CD8-positive, alpha-beta T cell (primary cell): ENCODE measurements at regions of chr5 and their contacts with region 1.

Region 1: GRCh38 chr5:95846554-95847260 is 24.2 kb upstream of the GLRX start:
- DNase-seq: peak; percentile 32 to 82 (median 64)
- ATAC-seq: peak; percentile 88
- H3K4me3 ChIP-seq: no peak overlapping the region
- H3K4me3 Mint-ChIP-seq: no peak overlapping the region
- H3K27ac ChIP-seq: no peak overlapping the region
- H3K27ac Mint-ChIP-seq: no peak overlapping the region
- H3K4me1 ChIP-seq: peaks cover 11% of the 10 kb centered on the region
- H3K4me1 Mint-ChIP-seq: peaks cover 10% of the 10 kb centered on the region
- H3K27me3 ChIP-seq: no peaks in the 10 kb centered on the region
- H3K27me3 Mint-ChIP-seq: no peaks in the 10 kb centered on the region
- CTCF ChIP-seq: peak; percentile 91

Region 2: DNA sequence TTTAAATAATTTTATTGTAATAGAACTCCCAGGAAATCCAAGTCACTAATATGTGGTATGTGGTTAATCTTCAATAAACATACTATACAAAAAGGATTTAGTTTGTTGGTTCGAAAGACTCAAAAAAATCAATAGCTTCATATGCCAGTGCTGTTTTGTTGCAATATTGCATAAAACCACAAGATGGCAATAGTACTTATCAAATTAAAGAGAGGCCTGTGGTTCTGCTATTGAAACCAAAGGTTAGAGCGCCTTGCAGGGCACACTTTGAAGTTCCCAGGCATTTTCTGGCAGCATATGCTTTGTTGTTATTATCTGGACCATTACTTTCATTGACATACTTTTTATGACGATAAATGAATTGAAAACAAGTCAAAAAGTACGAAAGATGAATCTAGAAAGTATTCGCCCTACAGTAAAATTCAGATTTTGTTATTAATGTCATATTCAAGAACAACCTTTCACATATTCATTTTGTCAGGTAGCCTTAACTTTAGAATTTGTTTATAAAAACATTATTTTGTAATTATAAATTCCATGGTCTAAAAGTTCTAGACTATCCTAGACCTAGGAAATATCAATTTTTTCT is 878.1 kb before region 1 on chr5:
- CTCF ChIA-PET with region 1: no interaction called
- POLR2A ChIA-PET with region 1: no interaction called
- intact Hi-C with region 1: loop called (anchors 5 to 10 kb)
- DNase-seq: peak in 2 of 9 experiments; percentile 35 to 54
- ATAC-seq: peak; percentile 40
- H3K4me3 ChIP-seq: no peak overlapping the region
- H3K4me3 Mint-ChIP-seq: no peak overlapping the region
- H3K27ac ChIP-seq: no peak overlapping the region
- H3K27ac Mint-ChIP-seq: no peak overlapping the region
- H3K4me1 ChIP-seq: no peaks in the 10 kb centered on the region
- H3K4me1 Mint-ChIP-seq: no peaks in the 10 kb centered on the region
- H3K27me3 ChIP-seq: no peaks in the 10 kb centered on the region
- H3K27me3 Mint-ChIP-seq: no peaks in the 10 kb centered on the region
- CTCF ChIP-seq: peak; percentile 80

Region 3: DNA sequence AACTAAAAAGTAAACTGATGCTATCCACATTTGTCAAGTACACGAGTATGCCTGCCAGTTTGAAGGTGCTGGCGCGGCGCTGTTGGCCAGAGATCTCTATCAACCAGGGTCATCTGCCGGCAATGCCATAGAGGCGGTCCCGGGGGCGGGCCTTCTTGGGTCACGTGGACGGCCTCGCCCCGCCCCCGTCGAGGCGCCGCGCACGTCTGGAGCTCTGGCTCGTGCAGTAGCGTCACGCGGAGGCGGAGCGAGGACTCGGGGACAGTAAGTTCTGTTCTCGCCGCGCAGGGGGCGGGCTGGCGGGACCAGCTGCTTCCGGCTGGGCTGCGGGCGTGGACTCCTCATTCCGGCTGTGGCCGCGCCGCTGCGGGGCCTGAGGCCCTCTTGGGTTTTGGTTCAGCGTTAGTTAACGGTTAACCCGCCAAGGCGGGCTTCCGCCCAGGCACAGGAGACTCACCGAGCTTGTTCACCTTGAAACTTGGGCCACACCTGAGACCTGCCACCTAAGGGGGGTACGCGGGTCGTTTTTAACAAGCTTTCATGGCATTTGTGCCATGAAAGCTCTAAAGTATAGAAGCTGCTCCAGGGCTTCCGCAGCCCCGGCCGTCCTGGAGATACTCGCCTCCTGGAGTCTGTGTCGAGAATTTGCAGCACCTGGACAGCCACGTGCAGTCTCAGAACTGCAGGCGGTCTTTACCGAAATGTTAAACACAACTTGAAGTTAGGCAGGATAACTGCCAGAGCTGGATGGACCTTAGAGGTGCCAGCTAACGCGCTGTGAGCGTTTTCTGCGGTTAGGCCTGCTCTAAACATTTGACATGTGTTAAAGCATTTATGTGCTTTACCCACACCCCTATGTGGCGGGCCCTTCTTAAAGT is 199.9 kb before region 1 on chr5 and contains the start of gene RFESD:
- CTCF ChIA-PET with region 1: interaction called, 20 read pairs
- POLR2A ChIA-PET with region 1: no interaction called
- intact Hi-C with region 1: loop called (anchors 1 kb)
- DNase-seq: peak; percentile 86 to 96 (median 93)
- ATAC-seq: peak; percentile 93
- H3K4me3 ChIP-seq: peak within 1 kb of the TSS; percentile 67 to 77
- H3K4me3 Mint-ChIP-seq: peak within 1 kb of the TSS; percentile 91
- H3K27ac ChIP-seq: peak within 1 kb of the TSS; percentile 76 to 85
- H3K27ac Mint-ChIP-seq: peak within 1 kb of the TSS; percentile 94
- H3K4me1 ChIP-seq: peaks cover 20% of the 10 kb centered on the region
- H3K4me1 Mint-ChIP-seq: peaks cover 40% of the 10 kb centered on the region
- H3K27me3 ChIP-seq: no peaks in the 10 kb centered on the region
- H3K27me3 Mint-ChIP-seq: no peaks in the 10 kb centered on the region
- CTCF ChIP-seq: peak; percentile 22
- total RNA-seq, gene RFESD: 1.00 to 1.7 TPM

Region 4: GRCh38 chr5:95773335-95774059 is 73.2 kb before region 1 on chr5:
- CTCF ChIA-PET with region 1: interaction called, 641 read pairs
- POLR2A ChIA-PET with region 1: no interaction called
- intact Hi-C with region 1: no loop called
- DNase-seq: peak in 2 of 9 experiments; percentile 25 to 27
- ATAC-seq: no peak
- H3K4me3 ChIP-seq: no peak overlapping the region
- H3K4me3 Mint-ChIP-seq: no peak overlapping the region
- H3K27ac ChIP-seq: no peak overlapping the region
- H3K27ac Mint-ChIP-seq: no peak overlapping the region
- H3K4me1 ChIP-seq: no peaks in the 10 kb centered on the region
- H3K4me1 Mint-ChIP-seq: no peaks in the 10 kb centered on the region
- H3K27me3 ChIP-seq: no peaks in the 10 kb centered on the region
- H3K27me3 Mint-ChIP-seq: no peaks in the 10 kb centered on the region
- CTCF ChIP-seq: no peak

Region 5: DNA sequence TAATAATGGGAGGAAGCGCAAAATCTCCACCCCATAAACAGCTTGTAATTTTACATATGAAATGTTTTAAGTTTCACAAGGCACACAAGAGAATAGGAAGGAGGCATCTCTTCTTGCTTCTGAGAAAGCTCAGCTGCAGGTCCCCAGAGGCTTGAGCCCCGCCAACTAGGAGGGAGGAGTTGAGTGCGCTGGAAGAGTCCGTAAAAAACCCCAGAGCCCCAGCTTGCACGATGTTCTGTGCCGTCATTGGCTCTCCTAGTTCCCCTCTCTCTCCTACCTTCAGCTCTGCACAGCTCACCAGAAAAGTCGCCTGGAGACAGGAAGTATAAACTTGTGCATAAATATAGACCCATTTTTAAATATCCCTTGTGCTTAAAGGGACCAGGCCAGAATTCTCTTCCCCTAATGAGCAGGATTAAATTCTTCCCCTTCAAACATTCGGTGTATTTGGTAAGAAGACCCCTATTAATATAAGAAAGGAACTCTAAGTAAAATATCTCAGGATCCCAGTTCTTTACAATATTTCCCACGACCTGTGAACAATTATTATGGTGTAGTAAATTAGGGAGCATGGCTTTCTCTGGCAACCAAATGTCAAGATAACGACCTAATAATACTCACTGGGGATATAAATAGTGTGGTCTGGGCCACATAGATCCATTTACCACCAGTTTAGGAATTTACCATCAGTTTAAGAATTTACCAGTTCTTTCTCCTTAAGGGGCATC is 37.9 kb before region 1 on chr5:
- CTCF ChIA-PET with region 1: interaction called, 13 read pairs
- POLR2A ChIA-PET with region 1: no interaction called
- intact Hi-C with region 1: loop called in 1 of 2 experiments (anchors 5 kb)
- DNase-seq: peak; percentile 54 to 95 (median 79)
- ATAC-seq: peak; percentile 99
- H3K4me3 ChIP-seq: peak overlapping the region in 1 of 2 experiments; percentile 9
- H3K4me3 Mint-ChIP-seq: peak overlapping the region; percentile 70
- H3K27ac ChIP-seq: peak overlapping the region; percentile 5 to 61
- H3K27ac Mint-ChIP-seq: peak overlapping the region; percentile 80
- H3K4me1 ChIP-seq: peaks cover 60% of the 10 kb centered on the region
- H3K4me1 Mint-ChIP-seq: peaks cover 58% of the 10 kb centered on the region
- H3K27me3 ChIP-seq: no peaks in the 10 kb centered on the region
- H3K27me3 Mint-ChIP-seq: no peaks in the 10 kb centered on the region
- CTCF ChIP-seq: no peak

Region 6: GRCh38 chr5:95822542-95823181 is 24.0 kb before region 1 on chr5 and contains the start of gene GLRX:
- CTCF ChIA-PET with region 1: interaction called, 33 read pairs
- POLR2A ChIA-PET with region 1: no interaction called
- intact Hi-C with region 1: no loop called
- DNase-seq: peak in 8 of 9 experiments; percentile 42 to 75 (median 60)
- ATAC-seq: peak; percentile 39
- H3K4me3 ChIP-seq: peak within 1 kb of the TSS; percentile 89 to 91
- H3K4me3 Mint-ChIP-seq: peak within 1 kb of the TSS; percentile 98
- H3K27ac ChIP-seq: peak within 1 kb of the TSS; percentile 65 to 84
- H3K27ac Mint-ChIP-seq: peak within 1 kb of the TSS; percentile 96
- H3K4me1 ChIP-seq: peaks cover 52% of the 10 kb centered on the region
- H3K4me1 Mint-ChIP-seq: peaks cover 66% of the 10 kb centered on the region
- H3K27me3 ChIP-seq: no peaks in the 10 kb centered on the region
- H3K27me3 Mint-ChIP-seq: no peaks in the 10 kb centered on the region
- CTCF ChIP-seq: no peak
- total RNA-seq, gene GLRX: 17.9 to 19.5 TPM

Region 7: DNA sequence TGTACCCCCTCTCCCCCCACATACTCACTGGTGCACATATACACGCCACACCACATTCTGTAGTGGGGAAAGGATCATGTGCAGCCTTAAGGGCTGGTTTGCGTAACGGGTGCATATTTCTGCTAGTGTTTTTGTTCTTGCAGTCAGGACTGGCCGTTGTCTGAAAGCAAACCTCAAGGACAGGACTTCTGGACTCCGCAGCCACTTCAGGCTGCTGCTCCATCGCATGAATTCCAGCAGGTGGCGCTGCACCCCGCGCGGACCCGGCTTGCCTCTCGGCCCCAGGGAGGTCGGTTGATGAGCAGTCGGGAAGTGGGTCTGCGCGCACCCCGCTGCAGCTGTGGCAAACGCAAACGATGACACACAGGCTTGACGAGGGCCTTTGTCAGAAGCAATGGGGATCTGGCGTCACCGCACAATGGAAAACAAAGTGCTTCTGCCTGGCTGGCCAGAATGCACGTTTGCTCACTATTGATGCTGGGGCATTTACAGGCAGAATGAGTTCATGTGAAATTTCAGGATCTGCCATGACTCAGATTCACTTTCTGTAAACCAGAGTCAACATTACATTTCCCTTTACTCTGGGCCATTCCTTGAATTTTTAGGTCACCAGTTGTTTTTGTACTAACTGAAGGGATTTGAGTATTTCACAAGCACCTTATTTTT is 12.1 kb after region 1 on chr5:
- CTCF ChIA-PET with region 1: interaction called, 34 read pairs
- POLR2A ChIA-PET with region 1: no interaction called
- intact Hi-C with region 1: no loop called
- DNase-seq: peak; percentile 76 to 95 (median 92)
- ATAC-seq: peak; percentile 98
- H3K4me3 ChIP-seq: no peak overlapping the region
- H3K4me3 Mint-ChIP-seq: peak overlapping the region; percentile 47
- H3K27ac ChIP-seq: no peak overlapping the region
- H3K27ac Mint-ChIP-seq: peak overlapping the region; percentile 34
- H3K4me1 ChIP-seq: peaks cover 9% of the 10 kb centered on the region
- H3K4me1 Mint-ChIP-seq: peaks cover 25% of the 10 kb centered on the region
- H3K27me3 ChIP-seq: no peaks in the 10 kb centered on the region
- H3K27me3 Mint-ChIP-seq: peaks cover 10% of the 10 kb centered on the region
- CTCF ChIP-seq: peak; percentile 93